GM12878 (cell line): ENCODE measurements at regions of chr2 and their contacts with region 1.

Region 1: GRCh38 chr2:207143215-207144172 is 22.3 kb downstream of the KLF7 start:
- DNase-seq: no peak
- ATAC-seq: peak; percentile 72
- H3K4me3 ChIP-seq: peak overlapping the region; percentile 29
- H3K27ac ChIP-seq: peak overlapping the region; percentile 77
- H3K4me1 ChIP-seq: peaks cover 20% of the 10 kb centered on the region
- H3K27me3 ChIP-seq: no peaks in the 10 kb centered on the region
- CTCF ChIP-seq: no peak
- EP300 ChIP-seq: no peak
- POLR2A ChIP-seq: no peak
- RAD21 ChIP-seq: no peak

Region 2: GRCh38 chr2:207126724-207127308 is 16.7 kb before region 1 on chr2:
- CTCF ChIA-PET with region 1: interaction called, 7 read pairs
- POLR2A ChIA-PET with region 1: interaction called, 3 read pairs
- RAD21 ChIA-PET with region 1: interaction called, 13 read pairs
- SMC1A ChIA-PET with region 1: interaction called, 51 read pairs
- in situ Hi-C with region 1: no loop called
- intact Hi-C with region 1: no loop called
- DNase-seq: no peak
- ATAC-seq: no peak
- H3K4me3 ChIP-seq: no peak overlapping the region
- H3K27ac ChIP-seq: no peak overlapping the region
- H3K4me1 ChIP-seq: no peaks in the 10 kb centered on the region
- H3K27me3 ChIP-seq: no peaks in the 10 kb centered on the region
- CTCF ChIP-seq: no peak
- EP300 ChIP-seq: no peak
- POLR2A ChIP-seq: no peak
- RAD21 ChIP-seq: no peak

Region 3: GRCh38 chr2:207156451-207157161 is 13.1 kb after region 1 on chr2:
- CTCF ChIA-PET with region 1: interaction called, 36 read pairs
- POLR2A ChIA-PET with region 1: interaction called, 20 read pairs
- RAD21 ChIA-PET with region 1: interaction called, 58 read pairs
- SMC1A ChIA-PET with region 1: interaction called, 61 read pairs
- in situ Hi-C with region 1: no loop called
- intact Hi-C with region 1: no loop called
- DNase-seq: no peak
- ATAC-seq: peak; percentile 78
- H3K4me3 ChIP-seq: no peak overlapping the region
- H3K27ac ChIP-seq: no peak overlapping the region
- H3K4me1 ChIP-seq: peaks cover 28% of the 10 kb centered on the region
- H3K27me3 ChIP-seq: no peaks in the 10 kb centered on the region
- CTCF ChIP-seq: no peak
- EP300 ChIP-seq: peak in 1 of 2 experiments; percentile 80; a peak in 1 of 4 replicates
- POLR2A ChIP-seq: no peak
- RAD21 ChIP-seq: peak; percentile 16; the same call in 1 of the 2 replicates

Region 4: DNA sequence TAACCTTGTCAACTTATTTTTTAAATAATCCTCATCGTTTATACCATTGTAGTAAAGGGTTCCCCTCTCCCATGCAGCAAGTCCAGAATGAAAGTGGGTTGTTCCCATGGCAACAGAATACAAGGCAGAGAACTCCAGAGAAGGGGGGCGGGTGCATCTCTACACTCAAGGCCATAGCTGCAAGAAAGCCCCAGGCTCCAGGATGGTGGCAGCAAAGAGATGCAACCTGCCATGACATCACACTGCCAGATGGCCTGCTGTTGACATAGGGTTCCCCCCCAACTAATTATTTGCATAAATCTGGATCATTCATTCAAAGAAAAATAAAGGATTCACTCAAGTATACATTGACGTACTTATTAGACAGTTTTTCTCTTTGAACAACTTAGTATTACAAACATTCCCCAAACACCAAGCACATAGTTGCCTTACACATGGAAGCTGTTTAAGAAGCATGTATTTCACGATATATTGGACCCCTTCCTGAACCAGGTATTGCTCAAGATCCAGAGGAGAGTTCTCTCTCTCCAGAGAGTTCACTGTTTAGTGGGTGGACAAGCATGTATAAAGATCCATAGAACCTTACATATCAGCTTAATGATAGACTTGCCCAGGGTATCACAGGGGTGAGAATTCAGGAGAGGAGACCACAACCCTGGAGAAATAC is 109.6 kb after region 1 on chr2:
- CTCF ChIA-PET with region 1: no interaction called
- POLR2A ChIA-PET with region 1: no interaction called
- RAD21 ChIA-PET with region 1: no interaction called
- SMC1A ChIA-PET with region 1: no interaction called
- in situ Hi-C with region 1: no loop called
- intact Hi-C with region 1: no loop called
- DNase-seq: no peak
- ATAC-seq: no peak
- H3K4me3 ChIP-seq: no peak overlapping the region
- H3K27ac ChIP-seq: no peak overlapping the region
- H3K4me1 ChIP-seq: no peaks in the 10 kb centered on the region
- H3K27me3 ChIP-seq: no peaks in the 10 kb centered on the region
- CTCF ChIP-seq: no peak
- EP300 ChIP-seq: no peak
- POLR2A ChIP-seq: no peak
- RAD21 ChIP-seq: no peak